Prostate gland (tissue), 2 donors: ENCODE measurements at regions of chr17 and their contacts with region 1.

Region 1: GRCh38 chr17:35337364-35337763 is 36.1 kb downstream of the SLFN11 start:
- DNase-seq: no peak
- H3K4me3 ChIP-seq: no peak overlapping the region
- H3K27ac ChIP-seq: no peak overlapping the region
- H3K4me1 ChIP-seq: no peaks in the 10 kb centered on the region
- H3K27me3 ChIP-seq: peaks cover 2% of the 10 kb centered on the region
- CTCF ChIP-seq: no peak
- POLR2A ChIP-seq: no peak

Region 2: GRCh38 chr17:35088881-35089585 is 248.3 kb before region 1 on chr17:
- intact Hi-C with region 1: no loop called
- DNase-seq: peak; percentile 86
- H3K4me3 ChIP-seq: peak overlapping the region; percentile 89 to 90
- H3K27ac ChIP-seq: peak overlapping the region; percentile 95 to 96
- H3K4me1 ChIP-seq: no peaks in the 10 kb centered on the region
- H3K27me3 ChIP-seq: no peaks in the 10 kb centered on the region
- CTCF ChIP-seq: peak; percentile 87 to 96 (median 94)
- POLR2A ChIP-seq: peak; percentile 56

Region 3: GRCh38 chr17:35214631-35215273 is 122.6 kb before region 1 on chr17:
- intact Hi-C with region 1: loop called (anchors 5 kb)
- DNase-seq: no peak
- H3K4me3 ChIP-seq: no peak overlapping the region
- H3K27ac ChIP-seq: no peak overlapping the region
- H3K4me1 ChIP-seq: no peaks in the 10 kb centered on the region
- H3K27me3 ChIP-seq: no peaks in the 10 kb centered on the region
- CTCF ChIP-seq: no peak
- POLR2A ChIP-seq: no peak